Calu3 (cell line): ENCODE measurements at regions of chr2 and their contacts with region 1.

Region 1: GRCh38 chr2:6896930-6897759 is 19.6 kb downstream of the RSAD2 start:
- DNase-seq: no peak
- H3K4me3 Mint-ChIP-seq: no peak overlapping the region
- H3K27ac Mint-ChIP-seq: no peak overlapping the region
- H3K4me1 Mint-ChIP-seq: no peaks in the 10 kb centered on the region
- H3K27me3 Mint-ChIP-seq: peaks cover 3% of the 10 kb centered on the region
- CTCF ChIP-seq: peak; percentile 55

Region 2: GRCh38 chr2:6423157-6423556 is 474.0 kb before region 1 on chr2:
- CTCF ChIA-PET with region 1: no interaction called
- intact Hi-C with region 1: no loop called
- DNase-seq: no peak
- H3K4me3 Mint-ChIP-seq: no peak overlapping the region
- H3K27ac Mint-ChIP-seq: no peak overlapping the region
- H3K4me1 Mint-ChIP-seq: no peaks in the 10 kb centered on the region
- H3K27me3 Mint-ChIP-seq: no peaks in the 10 kb centered on the region
- CTCF ChIP-seq: no peak

Region 3: GRCh38 chr2:6822406-6822805 is 74.7 kb before region 1 on chr2:
- CTCF ChIA-PET with region 1: no interaction called
- intact Hi-C with region 1: no loop called
- DNase-seq: no peak
- H3K4me3 Mint-ChIP-seq: no peak overlapping the region
- H3K27ac Mint-ChIP-seq: no peak overlapping the region
- H3K4me1 Mint-ChIP-seq: peaks cover 11% of the 10 kb centered on the region
- H3K27me3 Mint-ChIP-seq: peaks cover 42% of the 10 kb centered on the region
- CTCF ChIP-seq: no peak

Region 4: DNA sequence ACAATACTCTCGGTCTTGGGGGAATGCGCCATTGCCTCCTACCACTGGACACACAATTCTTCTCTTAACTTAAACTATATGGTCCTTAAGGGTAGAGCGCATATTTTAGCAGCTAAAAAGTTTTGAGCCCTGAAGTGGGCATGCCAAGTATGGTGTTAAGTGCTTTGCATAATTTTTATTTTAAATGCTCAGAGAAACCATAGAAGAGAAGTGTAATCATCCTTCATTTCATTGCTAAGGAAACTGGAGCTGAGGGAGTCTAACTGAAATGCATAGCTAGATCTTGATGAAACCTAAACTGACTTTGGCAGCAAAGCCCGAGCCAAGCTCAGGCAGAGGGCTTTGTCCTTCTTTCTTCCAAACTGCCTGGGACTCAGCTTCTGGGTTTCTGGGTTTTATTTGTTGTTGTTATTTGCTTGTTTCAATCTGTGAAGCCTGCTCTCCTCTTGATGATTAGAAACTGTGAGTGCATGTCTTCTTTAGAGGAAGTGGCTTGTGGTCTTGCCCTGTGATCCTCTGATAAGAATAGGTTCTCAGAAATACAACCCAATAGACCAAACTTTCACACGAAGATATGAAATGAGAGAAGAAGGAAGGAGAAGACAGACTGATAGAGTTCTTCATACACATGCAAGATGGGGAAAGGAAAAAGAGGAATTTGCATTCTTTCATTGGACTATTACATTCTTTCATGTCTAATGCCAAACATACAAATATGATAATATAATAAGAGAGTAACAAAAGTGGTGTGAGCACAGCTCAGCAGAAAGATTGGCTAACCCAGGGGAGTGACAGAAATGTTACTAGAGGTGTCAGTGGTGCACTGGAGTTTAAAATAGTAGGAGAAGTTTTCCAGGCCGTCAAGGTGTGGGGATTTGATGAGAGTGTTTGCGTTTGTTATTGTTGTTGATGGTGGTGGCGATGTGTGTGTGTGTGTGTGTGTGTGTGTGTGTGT is 12.6 kb after region 1 on chr2:
- CTCF ChIA-PET with region 1: no interaction called
- intact Hi-C with region 1: no loop called
- DNase-seq: no peak
- H3K4me3 Mint-ChIP-seq: no peak overlapping the region
- H3K27ac Mint-ChIP-seq: no peak overlapping the region
- H3K4me1 Mint-ChIP-seq: peaks cover 21% of the 10 kb centered on the region
- H3K27me3 Mint-ChIP-seq: no peaks in the 10 kb centered on the region
- CTCF ChIP-seq: no peak

Region 5: GRCh38 chr2:7031547-7032245 is 134.6 kb after region 1 on chr2:
- CTCF ChIA-PET with region 1: interaction called, 7 read pairs
- intact Hi-C with region 1: loop called (anchors 1 kb)
- DNase-seq: peak; percentile 96
- H3K4me3 Mint-ChIP-seq: no peak overlapping the region
- H3K27ac Mint-ChIP-seq: peak overlapping the region; percentile 46
- H3K4me1 Mint-ChIP-seq: peaks cover 16% of the 10 kb centered on the region
- H3K27me3 Mint-ChIP-seq: no peaks in the 10 kb centered on the region
- CTCF ChIP-seq: peak; percentile 39

Region 6: GRCh38 chr2:7044261-7045250 is 147.4 kb after region 1 on chr2:
- CTCF ChIA-PET with region 1: interaction called, 6 read pairs
- intact Hi-C with region 1: loop called (anchors 1 kb)
- DNase-seq: peak; percentile 67
- H3K4me3 Mint-ChIP-seq: no peak overlapping the region
- H3K27ac Mint-ChIP-seq: no peak overlapping the region
- H3K4me1 Mint-ChIP-seq: no peaks in the 10 kb centered on the region
- H3K27me3 Mint-ChIP-seq: no peaks in the 10 kb centered on the region
- CTCF ChIP-seq: peak; percentile 92

Region 7: GRCh38 chr2:7083577-7084509 is 186.7 kb after region 1 on chr2:
- CTCF ChIA-PET with region 1: no interaction called
- intact Hi-C with region 1: loop called (anchors 1 kb)
- DNase-seq: peak; percentile 40
- H3K4me3 Mint-ChIP-seq: no peak overlapping the region
- H3K27ac Mint-ChIP-seq: no peak overlapping the region
- H3K4me1 Mint-ChIP-seq: no peaks in the 10 kb centered on the region
- H3K27me3 Mint-ChIP-seq: peaks cover 17% of the 10 kb centered on the region
- CTCF ChIP-seq: peak; percentile 64